ENCODE measurements at regions of chr9 and their contacts with region 1.

Region 1: DNA sequence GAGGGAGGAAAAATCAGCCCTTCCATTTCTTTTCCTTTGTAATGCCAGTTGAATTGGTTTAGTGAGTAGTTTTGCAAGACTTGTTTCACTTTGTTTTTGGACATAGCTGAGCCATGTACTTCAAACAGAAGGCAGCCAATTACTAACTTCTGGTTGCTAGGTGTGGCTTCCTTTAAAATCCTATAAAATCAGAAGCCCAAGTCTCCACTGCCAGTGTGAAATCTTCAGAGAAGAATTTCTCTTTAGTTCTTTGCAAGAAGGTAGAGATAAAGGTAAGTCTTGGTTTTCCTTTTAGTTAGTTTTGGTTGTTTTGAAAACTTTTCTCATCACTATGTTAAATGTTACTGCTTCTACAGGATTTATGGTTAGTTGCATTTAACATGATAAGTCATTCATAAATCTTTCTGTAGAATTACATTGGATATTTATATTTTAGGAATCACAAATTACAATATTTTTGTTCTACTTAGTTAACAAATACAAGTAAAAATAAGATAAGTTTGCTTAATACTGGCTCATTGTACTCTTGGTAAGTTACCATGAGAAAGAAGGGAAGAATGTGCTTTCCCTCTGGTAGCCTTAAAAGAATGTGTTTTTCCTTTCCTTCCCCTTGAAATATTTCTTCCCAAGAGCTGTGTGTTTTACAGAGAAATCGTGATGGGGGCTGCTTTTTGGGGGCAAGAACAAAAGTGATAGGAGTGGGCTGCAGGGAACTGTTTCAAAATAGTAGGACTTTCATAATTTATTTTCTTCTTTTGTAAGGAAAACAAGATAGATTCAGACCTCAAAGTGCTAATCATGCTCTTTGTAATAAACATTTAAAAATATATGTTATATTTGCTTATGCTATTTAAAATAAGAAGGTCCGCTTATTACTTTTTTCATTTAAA is at the start of gene ANXA1:
- DNase-seq: peak; percentile 83
- ATAC-seq: peak; percentile 52
- H3K4me3 ChIP-seq: peak within 1 kb of the TSS; percentile 96
- H3K27ac ChIP-seq: peak within 1 kb of the TSS; percentile 90
- H3K4me1 ChIP-seq: peaks cover 5% of the 10 kb centered on the region
- H3K27me3 ChIP-seq: no peaks in the 10 kb centered on the region
- CTCF ChIP-seq: no peak
- POLR2A ChIP-seq: peak; percentile 98
- RAD21 ChIP-seq: no peak
- total RNA-seq, gene ANXA1: 583 and 637 TPM in 2 replicates

Region 2: DNA sequence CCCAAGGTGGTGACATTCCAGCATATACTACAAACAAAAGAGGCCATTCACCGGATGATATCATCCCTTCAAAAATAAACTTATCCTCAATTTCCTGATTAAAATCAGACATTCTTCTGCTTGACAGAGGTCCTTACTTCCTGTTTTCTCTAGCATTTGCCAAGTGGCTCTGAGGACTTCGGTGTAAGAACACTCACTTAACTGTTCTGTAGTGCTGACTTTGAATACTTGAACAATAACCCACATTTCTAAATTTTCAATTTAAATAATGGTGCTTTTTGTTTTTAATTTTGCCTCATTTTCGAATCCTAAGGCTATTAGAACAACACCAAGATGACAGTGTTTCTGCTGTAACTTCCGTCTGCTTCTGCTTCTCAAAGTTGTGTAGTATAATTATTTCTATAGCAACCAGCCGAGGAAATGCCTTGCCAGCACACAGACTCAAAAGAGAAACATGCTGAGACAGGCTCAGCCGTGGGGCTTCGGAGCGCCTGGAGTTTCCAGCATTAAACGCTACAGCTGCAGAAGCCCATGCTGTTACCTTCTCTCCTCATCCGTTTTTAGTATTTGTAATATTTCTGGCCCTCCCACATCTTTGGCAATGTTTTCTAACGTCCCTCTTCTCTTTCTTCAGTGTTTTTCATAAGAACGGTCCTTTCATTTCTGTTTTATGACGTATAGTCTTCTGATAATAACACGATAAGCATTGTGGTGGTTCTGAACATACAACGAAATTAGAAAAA is 19.7 kb before region 1 on chr9:
- CTCF ChIA-PET with region 1: interaction called, 3 read pairs
- POLR2A ChIA-PET with region 1: interaction called, 3 read pairs
- dilution Hi-C with region 1: no loop called
- in situ Hi-C with region 1: no loop called
- intact Hi-C with region 1: loop called (anchors 2 kb)
- DNase-seq: peak; percentile 85
- ATAC-seq: peak; percentile 94
- H3K4me3 ChIP-seq: peak overlapping the region; percentile 86
- H3K27ac ChIP-seq: peak overlapping the region; percentile 30
- H3K4me1 ChIP-seq: peaks cover 4% of the 10 kb centered on the region; the same call in 1 of the 2 replicates
- H3K27me3 ChIP-seq: no peaks in the 10 kb centered on the region
- CTCF ChIP-seq: no peak
- POLR2A ChIP-seq: peak; percentile 78
- RAD21 ChIP-seq: no peak